Activated CD4-positive, alpha-beta memory T cell treated with anti-CD3 and anti-CD28 coated beads for 36 hours (primary cell): ENCODE measurements at regions of chr13 and their contacts with region 1.

Region 1: GRCh38 chr13:22061351-22061805 is 390.5 kb downstream of the FGF9 start:
- DNase-seq: peak; percentile 77
- H3K4me3 Mint-ChIP-seq: peak overlapping the region; percentile 44
- H3K27ac Mint-ChIP-seq: peak overlapping the region; percentile 82
- H3K4me1 Mint-ChIP-seq: peaks cover 66% of the 10 kb centered on the region
- H3K27me3 Mint-ChIP-seq: no peaks in the 10 kb centered on the region

Region 2: DNA sequence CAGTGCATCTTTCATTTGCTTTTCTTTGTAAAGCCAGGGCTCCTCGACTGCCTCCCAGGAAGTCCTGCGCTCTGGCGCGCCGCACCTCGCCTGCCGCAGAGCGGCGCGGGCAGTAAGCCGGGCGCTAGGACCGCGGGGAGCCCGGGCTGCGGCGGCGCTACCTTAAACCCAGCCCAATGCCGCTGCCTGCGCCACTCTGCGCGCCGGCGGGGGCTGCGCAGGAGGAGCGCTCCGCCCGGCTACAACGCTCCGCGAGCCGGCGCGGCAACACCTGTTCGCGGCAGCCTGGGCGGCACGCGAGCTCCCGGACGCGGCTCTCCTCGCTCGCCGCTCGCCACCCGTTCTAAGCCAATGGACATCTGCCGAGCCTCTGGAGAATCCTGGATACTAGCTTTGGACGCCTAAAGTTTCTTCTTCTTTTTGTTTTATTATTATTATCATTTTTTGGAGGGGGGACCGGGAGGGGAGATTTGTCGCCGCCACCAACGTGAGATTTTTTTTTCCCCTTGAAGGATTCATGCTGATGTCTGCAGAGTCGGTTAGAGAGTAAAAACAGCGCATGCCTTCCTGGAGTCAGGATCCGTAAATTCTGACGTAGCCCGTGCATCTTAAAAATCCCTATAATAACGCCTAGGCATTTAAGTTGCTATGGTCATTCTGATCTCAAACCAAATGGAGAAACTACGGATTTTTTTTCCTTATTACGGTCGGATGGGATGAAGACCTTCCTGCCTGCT is 390.3 kb before region 1 on chr13 and contains the start of gene FGF9:
- CTCF ChIA-PET with region 1: no interaction called
- POLR2A ChIA-PET with region 1: no interaction called
- intact Hi-C with region 1: loop called (anchors 1 kb)
- DNase-seq: peak; percentile 86
- H3K4me3 Mint-ChIP-seq: peak within 1 kb of the TSS; percentile 85
- H3K27ac Mint-ChIP-seq: peak within 1 kb of the TSS; percentile 40
- H3K4me1 Mint-ChIP-seq: peaks cover 42% of the 10 kb centered on the region
- H3K27me3 Mint-ChIP-seq: peaks cover 28% of the 10 kb centered on the region
- total RNA-seq, gene FGF9: 0.07 TPM in 1 of 2 experiments, not detected in the other

Region 3: DNA sequence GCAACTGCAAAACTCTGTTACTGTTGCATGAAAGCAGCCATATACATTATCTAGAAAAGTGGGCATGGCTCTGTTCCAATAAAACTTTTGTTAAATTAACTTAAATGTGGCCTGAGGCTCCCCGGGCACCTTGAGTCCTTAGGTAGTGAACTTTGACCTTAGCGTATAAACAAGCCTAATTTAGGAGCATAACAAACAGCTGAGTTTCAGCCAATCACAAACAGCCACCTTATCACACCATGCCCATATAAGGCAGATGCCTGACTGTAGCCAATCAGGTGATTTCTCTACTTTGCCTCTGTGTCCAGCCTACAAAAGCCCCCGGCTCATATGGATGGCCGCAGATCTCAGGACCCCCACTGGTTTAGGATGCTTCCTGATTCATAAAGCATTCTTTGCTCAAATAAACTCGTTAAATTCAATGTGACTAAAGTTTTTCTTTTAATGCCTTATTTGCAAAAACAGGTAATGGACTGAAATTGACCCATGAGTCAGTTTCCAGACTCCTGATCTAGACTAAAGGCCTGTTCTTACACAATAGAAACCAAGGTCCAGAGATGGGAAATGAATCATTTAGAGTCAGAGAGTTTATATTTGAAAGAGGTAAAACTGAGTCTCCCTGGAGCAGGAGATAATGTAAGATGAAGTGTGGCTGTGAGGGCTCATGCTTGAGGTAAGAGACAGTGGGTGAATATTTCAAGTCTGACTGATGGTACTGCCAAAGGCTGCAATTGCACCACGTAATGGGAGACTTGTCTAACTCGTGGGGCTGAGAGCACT is 260.4 kb before region 1 on chr13:
- CTCF ChIA-PET with region 1: no interaction called
- POLR2A ChIA-PET with region 1: no interaction called
- intact Hi-C with region 1: no loop called
- DNase-seq: no peak
- H3K4me3 Mint-ChIP-seq: no peak overlapping the region
- H3K27ac Mint-ChIP-seq: no peak overlapping the region
- H3K4me1 Mint-ChIP-seq: no peaks in the 10 kb centered on the region
- H3K27me3 Mint-ChIP-seq: no peaks in the 10 kb centered on the region

Region 4: GRCh38 chr13:21948769-21949474 is 112.5 kb before region 1 on chr13:
- CTCF ChIA-PET with region 1: no interaction called
- POLR2A ChIA-PET with region 1: no interaction called
- intact Hi-C with region 1: no loop called
- DNase-seq: no peak
- H3K4me3 Mint-ChIP-seq: no peak overlapping the region
- H3K27ac Mint-ChIP-seq: no peak overlapping the region
- H3K4me1 Mint-ChIP-seq: no peaks in the 10 kb centered on the region
- H3K27me3 Mint-ChIP-seq: no peaks in the 10 kb centered on the region

Region 5: DNA sequence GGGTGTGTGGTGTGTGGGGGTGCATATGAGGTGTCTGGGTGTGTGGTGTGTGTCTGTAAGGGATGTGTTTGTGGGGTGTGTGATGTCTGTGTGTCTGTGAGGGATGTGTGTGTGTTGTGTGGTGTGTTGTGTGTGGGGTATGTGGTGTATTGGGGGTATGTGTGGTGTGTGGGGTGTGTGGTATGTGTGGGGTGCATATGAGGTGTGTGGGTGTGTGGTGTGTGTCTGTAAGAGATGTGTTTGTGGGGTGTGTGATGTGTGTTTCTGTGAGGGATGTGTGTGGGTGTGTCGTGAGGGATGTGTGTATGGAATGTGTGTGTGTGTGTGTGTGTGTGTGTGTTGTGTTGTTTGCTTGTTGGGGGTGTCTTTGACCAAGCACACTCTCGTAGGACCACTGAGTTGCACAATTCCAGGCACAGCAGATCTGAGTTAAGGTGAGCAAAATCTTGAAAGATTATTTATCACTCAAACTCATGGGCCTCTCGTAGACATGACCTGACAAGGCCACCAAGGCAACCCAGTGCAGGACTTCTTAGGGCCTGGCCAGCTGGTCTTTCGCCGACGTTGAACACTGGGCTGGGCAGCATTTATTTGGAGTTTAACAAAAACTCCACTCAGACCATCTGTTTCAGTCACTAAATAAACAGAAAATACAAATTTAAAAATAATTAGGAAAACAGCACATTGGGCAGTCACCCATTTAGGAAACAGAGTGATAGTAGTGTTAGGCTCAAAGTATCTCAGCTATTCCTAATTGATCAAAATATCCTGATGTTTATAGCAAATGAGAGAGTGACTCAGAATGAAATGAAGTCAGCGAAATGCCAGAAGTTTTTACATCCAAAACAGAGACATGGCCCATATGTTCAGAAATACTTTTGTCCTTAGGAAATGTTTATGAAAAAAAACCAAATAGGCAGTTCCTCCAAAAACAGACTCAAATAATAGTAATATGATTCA is 89.4 kb before region 1 on chr13:
- CTCF ChIA-PET with region 1: no interaction called
- POLR2A ChIA-PET with region 1: no interaction called
- intact Hi-C with region 1: no loop called
- DNase-seq: no peak
- H3K4me3 Mint-ChIP-seq: no peak overlapping the region
- H3K27ac Mint-ChIP-seq: no peak overlapping the region
- H3K4me1 Mint-ChIP-seq: no peaks in the 10 kb centered on the region
- H3K27me3 Mint-ChIP-seq: no peaks in the 10 kb centered on the region

Region 6: GRCh38 chr13:22018076-22018835 is 43.1 kb before region 1 on chr13:
- CTCF ChIA-PET with region 1: no interaction called
- POLR2A ChIA-PET with region 1: no interaction called
- intact Hi-C with region 1: loop called (anchors 2 kb)
- DNase-seq: peak; percentile 22
- H3K4me3 Mint-ChIP-seq: no peak overlapping the region
- H3K27ac Mint-ChIP-seq: no peak overlapping the region
- H3K4me1 Mint-ChIP-seq: peaks cover 9% of the 10 kb centered on the region
- H3K27me3 Mint-ChIP-seq: peaks cover 2% of the 10 kb centered on the region

Region 7: DNA sequence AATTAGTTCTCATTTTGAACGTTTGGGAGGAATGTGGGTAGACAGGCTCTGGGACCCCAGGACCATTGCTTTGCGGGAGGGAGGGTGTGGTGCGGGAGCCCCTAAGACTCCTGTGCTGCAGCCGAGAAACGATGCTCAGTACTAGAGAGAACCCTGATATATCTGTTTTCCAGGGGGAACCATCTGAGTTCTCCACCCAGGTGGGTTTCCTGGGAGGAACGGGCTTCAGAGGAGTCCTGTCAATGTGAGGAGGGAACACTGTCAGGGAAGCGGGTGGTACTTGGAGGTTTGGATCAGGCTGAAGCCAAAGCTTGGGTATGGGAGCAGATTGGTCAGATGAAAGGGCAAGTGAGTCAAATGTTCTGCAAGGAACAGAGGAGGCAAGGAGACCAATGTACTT is 32.5 kb before region 1 on chr13:
- CTCF ChIA-PET with region 1: no interaction called
- POLR2A ChIA-PET with region 1: no interaction called
- intact Hi-C with region 1: no loop called
- DNase-seq: no peak
- H3K4me3 Mint-ChIP-seq: no peak overlapping the region
- H3K27ac Mint-ChIP-seq: no peak overlapping the region
- H3K4me1 Mint-ChIP-seq: no peaks in the 10 kb centered on the region
- H3K27me3 Mint-ChIP-seq: no peaks in the 10 kb centered on the region

Region 8: DNA sequence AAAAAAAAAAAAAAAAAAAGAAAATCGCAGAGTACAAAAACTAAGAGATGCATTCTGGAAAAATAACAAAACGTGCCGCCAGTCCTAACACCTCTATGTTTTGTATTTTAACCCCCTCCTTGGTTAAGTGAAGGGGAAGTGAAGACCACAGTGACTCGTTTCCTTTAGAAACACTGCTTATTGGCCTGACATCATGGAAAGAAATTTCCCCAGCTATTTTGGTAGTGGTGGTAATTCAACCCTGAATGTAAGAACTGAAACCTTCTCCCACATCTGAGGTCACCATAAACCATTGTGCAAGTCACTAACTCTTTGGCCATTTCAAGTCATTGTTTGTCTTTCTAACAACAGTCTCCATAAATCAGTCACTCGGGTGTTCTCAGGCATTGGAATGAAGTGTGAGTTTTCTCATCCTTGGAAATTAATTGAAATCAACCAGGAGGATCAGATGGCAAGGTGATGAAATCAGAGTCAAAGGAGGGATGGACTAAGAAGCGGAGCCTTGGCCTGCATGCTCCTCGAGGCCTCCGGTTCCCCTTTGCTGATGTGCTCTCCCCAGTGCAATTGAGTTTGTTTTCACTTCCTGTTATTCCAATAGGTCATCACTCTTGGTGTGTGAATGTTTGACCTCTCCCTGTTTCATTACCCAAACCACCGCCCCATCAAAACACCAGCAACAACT is 53.4 kb after region 1 on chr13:
- CTCF ChIA-PET with region 1: no interaction called
- POLR2A ChIA-PET with region 1: interaction called, 3 read pairs
- intact Hi-C with region 1: loop called (anchors 1 kb)
- DNase-seq: peak; percentile 18
- H3K4me3 Mint-ChIP-seq: peak overlapping the region; percentile 3
- H3K27ac Mint-ChIP-seq: peak overlapping the region; percentile 79
- H3K4me1 Mint-ChIP-seq: peaks cover 51% of the 10 kb centered on the region
- H3K27me3 Mint-ChIP-seq: no peaks in the 10 kb centered on the region

Region 9: GRCh38 chr13:22161871-22162270 is 100.5 kb after region 1 on chr13:
- CTCF ChIA-PET with region 1: no interaction called
- POLR2A ChIA-PET with region 1: no interaction called
- intact Hi-C with region 1: loop called (anchors 2 kb)
- DNase-seq: no peak
- H3K4me3 Mint-ChIP-seq: peak overlapping the region; percentile 34
- H3K27ac Mint-ChIP-seq: no peak overlapping the region
- H3K4me1 Mint-ChIP-seq: peaks cover 39% of the 10 kb centered on the region
- H3K27me3 Mint-ChIP-seq: no peaks in the 10 kb centered on the region